ENCODE measurements at regions of chr2 and their contacts with region 1.

Region 1: DNA sequence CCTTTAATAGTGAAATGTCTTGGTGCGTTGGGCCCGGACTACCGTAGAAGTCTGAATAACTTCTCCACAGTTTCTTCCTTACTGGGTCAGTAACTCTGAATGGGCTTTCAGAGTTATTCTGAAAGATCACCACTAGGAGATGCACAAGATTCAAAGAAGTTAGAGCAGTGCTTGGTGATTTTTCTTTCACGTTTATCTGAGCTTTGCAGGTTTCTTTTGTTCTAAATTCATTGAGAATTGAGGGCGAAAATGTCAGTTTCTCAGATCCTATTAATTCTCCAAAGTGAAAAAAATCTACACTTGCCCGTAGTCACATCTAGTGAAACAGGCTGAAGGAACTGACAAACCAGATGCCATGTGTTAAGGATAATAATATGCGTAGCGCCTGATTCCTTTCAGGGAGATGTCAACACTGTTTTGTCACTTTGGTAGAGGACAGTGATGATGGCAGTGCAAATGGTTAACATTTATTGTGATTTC is 70.1 kb downstream of the QPCT start:
- DNase-seq: peak; percentile 53
- ATAC-seq: peak; percentile 94
- H3K4me3 ChIP-seq: no peak overlapping the region
- H3K27ac ChIP-seq: no peak overlapping the region
- H3K4me1 ChIP-seq: peaks cover 4% of the 10 kb centered on the region; the same call in 1 of the 2 replicates
- H3K27me3 ChIP-seq: no peaks in the 10 kb centered on the region
- CTCF ChIP-seq: peak; percentile 88 to 99 (median 98); a peak in 5 of 6 replicates
- EP300 ChIP-seq: no peak
- POLR2A ChIP-seq: no peak
- RAD21 ChIP-seq: peak; percentile 100

Region 2: DNA sequence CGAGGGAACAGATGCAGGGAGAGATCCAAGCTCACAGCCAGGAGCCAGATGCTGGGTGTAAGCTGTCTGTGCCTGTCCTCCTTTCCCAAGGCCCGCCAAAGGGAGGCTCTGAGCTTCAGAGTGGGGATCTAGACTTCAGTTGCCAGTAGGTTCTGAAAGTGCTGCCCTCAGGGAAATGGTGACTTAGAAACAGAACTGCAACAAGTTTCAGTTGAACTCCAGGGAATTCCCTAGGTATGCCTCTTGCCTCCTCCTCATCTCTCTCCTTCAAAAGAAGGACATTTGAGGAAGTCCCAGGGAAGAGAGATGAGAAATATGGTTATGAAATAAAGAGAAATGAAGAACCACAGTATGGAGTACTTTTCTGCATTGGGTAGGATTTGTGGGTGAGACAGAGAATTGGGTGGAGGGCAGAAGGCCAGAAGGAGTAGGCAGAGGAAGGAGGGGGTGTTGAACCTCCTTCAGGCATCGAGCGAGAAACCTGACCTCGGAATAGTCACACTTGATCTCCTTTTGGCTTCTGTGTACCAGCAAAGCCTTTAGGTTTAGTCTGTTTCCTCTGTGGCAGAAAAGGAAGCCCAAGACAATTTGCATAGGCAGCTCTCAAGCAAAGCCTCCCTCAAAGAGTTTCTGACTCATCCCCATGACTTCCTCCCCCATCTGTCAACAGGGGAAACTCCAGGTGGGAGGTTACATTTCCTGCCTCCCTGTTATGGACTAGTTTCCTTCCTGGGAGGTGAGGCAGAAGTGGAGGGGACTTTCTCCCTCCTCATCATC is 24.3 kb before region 1 on chr2:
- CTCF ChIA-PET with region 1: interaction called, 79 read pairs
- POLR2A ChIA-PET with region 1: no interaction called
- RAD21 ChIA-PET with region 1: interaction called, 33 read pairs
- SMC1A ChIA-PET with region 1: interaction called, 75 read pairs
- in situ Hi-C with region 1: no loop called
- intact Hi-C with region 1: no loop called
- DNase-seq: peak; percentile 94
- ATAC-seq: peak; percentile 96
- H3K4me3 ChIP-seq: peak overlapping the region; percentile 19; the same call in 1 of the 2 replicates
- H3K27ac ChIP-seq: peak overlapping the region; percentile 63
- H3K4me1 ChIP-seq: peaks cover 30% of the 10 kb centered on the region
- H3K27me3 ChIP-seq: no peaks in the 10 kb centered on the region
- CTCF ChIP-seq: no peak
- EP300 ChIP-seq: peak; percentile 58 to 90; a peak in 3 of 4 replicates
- POLR2A ChIP-seq: no peak
- RAD21 ChIP-seq: peak; percentile 9; the same call in 1 of the 2 replicates

Region 3: GRCh38 chr2:37543999-37544557 is 129.6 kb after region 1 on chr2:
- CTCF ChIA-PET with region 1: interaction called, 5 read pairs
- POLR2A ChIA-PET with region 1: interaction called, 3 read pairs
- RAD21 ChIA-PET with region 1: interaction called, 19 read pairs
- SMC1A ChIA-PET with region 1: interaction called, 10 read pairs
- in situ Hi-C with region 1: no loop called
- intact Hi-C with region 1: no loop called
- DNase-seq: no peak
- ATAC-seq: no peak
- H3K4me3 ChIP-seq: no peak overlapping the region
- H3K27ac ChIP-seq: no peak overlapping the region
- H3K4me1 ChIP-seq: peaks cover 8% of the 10 kb centered on the region; the same call in 1 of the 2 replicates
- H3K27me3 ChIP-seq: no peaks in the 10 kb centered on the region
- CTCF ChIP-seq: no peak
- EP300 ChIP-seq: no peak
- POLR2A ChIP-seq: no peak
- RAD21 ChIP-seq: no peak

Region 4: DNA sequence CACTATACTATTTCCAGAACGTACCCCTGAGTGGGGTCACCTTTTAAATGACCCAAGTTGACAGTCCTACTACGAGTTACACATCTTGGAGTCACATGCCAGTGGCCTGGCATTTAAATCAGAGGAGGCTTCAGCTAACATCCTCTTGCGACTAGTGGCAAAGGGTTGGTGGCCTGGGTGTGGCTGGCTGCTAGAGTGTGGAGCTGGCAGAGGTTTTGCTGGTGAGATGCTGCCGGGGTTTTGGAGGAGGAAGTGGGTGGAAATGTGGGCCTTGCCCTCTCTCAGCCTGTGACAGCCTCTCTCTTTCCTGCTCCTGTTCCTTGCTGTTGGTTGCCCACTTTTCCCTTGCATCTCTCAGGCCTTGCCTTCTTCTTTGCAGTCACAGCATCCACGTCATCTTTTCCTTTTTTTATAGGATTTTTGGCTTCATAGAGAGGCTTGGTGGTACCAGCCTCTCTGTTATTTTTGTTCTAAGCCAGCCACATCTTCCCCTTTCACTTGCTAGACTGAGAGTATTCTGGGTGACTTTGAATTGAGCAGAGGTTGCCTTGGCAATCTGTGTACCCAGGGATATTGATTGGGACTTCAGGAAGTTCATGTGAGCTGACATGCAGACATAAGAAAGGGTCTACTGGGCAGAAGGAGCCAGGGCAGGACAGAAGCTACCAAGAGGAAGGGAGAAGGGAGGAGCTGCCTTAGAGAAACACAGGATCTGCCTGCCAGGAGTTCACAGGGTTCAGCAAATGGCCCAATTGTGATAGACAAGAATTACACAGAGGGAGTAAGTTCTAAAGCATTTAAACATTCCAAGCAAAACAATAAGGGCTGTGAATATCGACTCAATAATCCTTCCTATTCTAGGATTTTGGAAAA is 201.5 kb after region 1 on chr2:
- CTCF ChIA-PET with region 1: interaction called, 7 read pairs
- POLR2A ChIA-PET with region 1: no interaction called
- RAD21 ChIA-PET with region 1: interaction called, 10 read pairs
- SMC1A ChIA-PET with region 1: interaction called, 25 read pairs
- in situ Hi-C with region 1: no loop called
- intact Hi-C with region 1: no loop called
- DNase-seq: no peak
- ATAC-seq: peak; percentile 58
- H3K4me3 ChIP-seq: no peak overlapping the region
- H3K27ac ChIP-seq: peak overlapping the region; percentile 72
- H3K4me1 ChIP-seq: peaks cover 17% of the 10 kb centered on the region
- H3K27me3 ChIP-seq: no peaks in the 10 kb centered on the region
- CTCF ChIP-seq: no peak
- EP300 ChIP-seq: no peak
- POLR2A ChIP-seq: no peak
- RAD21 ChIP-seq: no peak

Region 5: GRCh38 chr2:37665604-37666362 is 251.3 kb after region 1 on chr2:
- CTCF ChIA-PET with region 1: interaction called, 10 read pairs
- POLR2A ChIA-PET with region 1: no interaction called
- RAD21 ChIA-PET with region 1: interaction called, 10 read pairs
- SMC1A ChIA-PET with region 1: interaction called, 14 read pairs
- in situ Hi-C with region 1: loop called (anchors 5 kb)
- intact Hi-C with region 1: loop called (anchors 2 kb)
- DNase-seq: no peak
- ATAC-seq: peak; percentile 2; the same call in 1 of the 3 replicates
- H3K4me3 ChIP-seq: peak overlapping the region; percentile 82
- H3K27ac ChIP-seq: peak overlapping the region; percentile 28; the same call in 1 of the 2 replicates
- H3K4me1 ChIP-seq: 0 out of 2 replicates have a peak, but pooled peaks cover 3% of the 10 kb centered on the region
- H3K27me3 ChIP-seq: no peaks in the 10 kb centered on the region
- CTCF ChIP-seq: no peak
- EP300 ChIP-seq: no peak
- POLR2A ChIP-seq: no peak
- RAD21 ChIP-seq: no peak

Region 6: GRCh38 chr2:37851828-37852584 is 437.5 kb after region 1 on chr2:
- CTCF ChIA-PET with region 1: interaction called, 17 read pairs
- POLR2A ChIA-PET with region 1: interaction called, 6 read pairs
- RAD21 ChIA-PET with region 1: interaction called, 14 read pairs
- SMC1A ChIA-PET with region 1: interaction called, 30 read pairs
- in situ Hi-C with region 1: no loop called
- intact Hi-C with region 1: no loop called
- DNase-seq: peak; percentile 80
- ATAC-seq: peak; percentile 86
- H3K4me3 ChIP-seq: peak overlapping the region; percentile 17; the same call in 1 of the 2 replicates
- H3K27ac ChIP-seq: peak overlapping the region; percentile 67
- H3K4me1 ChIP-seq: peaks cover 32% of the 10 kb centered on the region
- H3K27me3 ChIP-seq: no peaks in the 10 kb centered on the region
- CTCF ChIP-seq: peak in 1 of 3 experiments; percentile 8; a peak in 1 of 6 replicates
- EP300 ChIP-seq: peak; percentile 23 to 53; a peak in 1 of 4 replicates
- POLR2A ChIP-seq: no peak
- RAD21 ChIP-seq: peak; percentile 45